ENCODE measurements at regions of chr15 and their contacts with region 1.

Region 1: DNA sequence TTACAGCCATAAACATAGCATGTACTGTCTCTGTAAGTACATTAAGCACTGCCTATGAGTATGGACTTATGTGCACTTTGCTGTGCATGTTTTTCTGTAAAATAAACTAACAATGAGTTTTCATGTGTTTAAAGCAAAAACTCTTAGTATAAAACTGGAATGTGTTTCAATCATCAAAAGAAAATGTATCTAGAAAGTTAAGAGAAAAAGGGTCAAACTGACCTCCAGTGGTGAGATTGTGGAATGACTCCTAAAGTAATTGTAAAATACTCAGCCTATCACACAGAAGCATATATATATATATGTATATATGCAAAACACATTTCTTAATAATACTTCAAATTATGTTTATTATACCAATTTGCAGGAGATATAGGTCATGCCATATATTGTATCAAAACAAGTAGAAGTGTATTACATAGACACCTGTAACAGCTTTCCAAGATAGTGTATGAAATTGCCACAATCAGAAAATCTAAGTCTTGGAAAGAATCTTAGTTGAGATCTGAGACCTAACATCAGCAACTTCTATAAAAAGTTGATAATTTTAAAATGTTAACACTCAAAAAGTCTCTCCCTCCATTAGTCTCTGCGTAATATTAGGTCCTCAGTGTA is 199.6 kb downstream of the FMN1 start:
- DNase-seq: peak in 1 of 9 experiments; percentile 7
- ATAC-seq: no peak
- H3K4me3 ChIP-seq: no peak overlapping the region
- H3K4me3 Mint-ChIP-seq: no peak overlapping the region
- H3K27ac ChIP-seq: no peak overlapping the region
- H3K27ac Mint-ChIP-seq: no peak overlapping the region
- H3K4me1 ChIP-seq: no peaks in the 10 kb centered on the region
- H3K4me1 Mint-ChIP-seq: no peaks in the 10 kb centered on the region
- H3K27me3 ChIP-seq: no peaks in the 10 kb centered on the region
- H3K27me3 Mint-ChIP-seq: peaks cover 7% of the 10 kb centered on the region
- CTCF ChIP-seq: peak; percentile 31

Region 2: GRCh38 chr15:32657198-32657883 is 337.6 kb before region 1 on chr15:
- CTCF ChIA-PET with region 1: no interaction called
- POLR2A ChIA-PET with region 1: no interaction called
- intact Hi-C with region 1: loop called in 1 of 2 experiments (anchors 10 kb)
- DNase-seq: peak in 2 of 9 experiments; percentile 23 to 39
- ATAC-seq: peak; percentile 52
- H3K4me3 ChIP-seq: no peak overlapping the region
- H3K4me3 Mint-ChIP-seq: peak overlapping the region; percentile 17
- H3K27ac ChIP-seq: no peak overlapping the region
- H3K27ac Mint-ChIP-seq: no peak overlapping the region
- H3K4me1 ChIP-seq: no peaks in the 10 kb centered on the region
- H3K4me1 Mint-ChIP-seq: peaks cover 7% of the 10 kb centered on the region
- H3K27me3 ChIP-seq: no peaks in the 10 kb centered on the region
- H3K27me3 Mint-ChIP-seq: no peaks in the 10 kb centered on the region
- CTCF ChIP-seq: no peak

Region 3: GRCh38 chr15:32946210-32946609 is 48.7 kb before region 1 on chr15:
- CTCF ChIA-PET with region 1: no interaction called
- POLR2A ChIA-PET with region 1: no interaction called
- intact Hi-C with region 1: loop called in 1 of 2 experiments (anchors 5 kb)
- DNase-seq: no peak
- ATAC-seq: no peak
- H3K4me3 ChIP-seq: no peak overlapping the region
- H3K4me3 Mint-ChIP-seq: no peak overlapping the region
- H3K27ac ChIP-seq: no peak overlapping the region
- H3K27ac Mint-ChIP-seq: no peak overlapping the region
- H3K4me1 ChIP-seq: no peaks in the 10 kb centered on the region
- H3K4me1 Mint-ChIP-seq: no peaks in the 10 kb centered on the region
- H3K27me3 ChIP-seq: no peaks in the 10 kb centered on the region
- H3K27me3 Mint-ChIP-seq: no peaks in the 10 kb centered on the region
- CTCF ChIP-seq: no peak

Region 4: DNA sequence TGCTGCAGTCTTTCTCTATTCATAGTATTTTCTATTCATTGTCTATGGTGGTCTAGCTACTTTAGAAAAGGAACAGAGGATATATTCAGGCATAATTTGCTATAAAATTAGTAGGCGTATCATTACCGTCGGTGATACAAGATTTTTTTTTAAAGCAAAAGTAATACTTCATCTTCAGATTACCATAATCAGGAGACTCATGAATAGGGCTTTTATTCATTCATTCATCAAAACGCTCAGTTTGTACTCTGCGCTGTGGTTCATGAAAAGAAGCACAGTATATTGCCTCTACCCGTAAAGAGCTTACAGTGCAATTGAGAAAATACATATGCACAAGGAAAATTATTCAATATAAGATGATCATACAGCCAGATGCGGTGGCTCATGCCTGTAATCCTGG is 836.7 kb after region 1 on chr15:
- CTCF ChIA-PET with region 1: no interaction called
- POLR2A ChIA-PET with region 1: no interaction called
- intact Hi-C with region 1: no loop called
- DNase-seq: no peak
- ATAC-seq: no peak
- H3K4me3 ChIP-seq: no peak overlapping the region
- H3K4me3 Mint-ChIP-seq: no peak overlapping the region
- H3K27ac ChIP-seq: no peak overlapping the region
- H3K27ac Mint-ChIP-seq: no peak overlapping the region
- H3K4me1 ChIP-seq: no peaks in the 10 kb centered on the region
- H3K4me1 Mint-ChIP-seq: no peaks in the 10 kb centered on the region
- H3K27me3 ChIP-seq: peaks cover 0 to 2% of the 10 kb centered on the region in 2 experiments
- H3K27me3 Mint-ChIP-seq: peaks cover 3% of the 10 kb centered on the region
- CTCF ChIP-seq: no peak